ENCODE measurements at regions of chr5 and their contacts with region 1.

Region 1: DNA sequence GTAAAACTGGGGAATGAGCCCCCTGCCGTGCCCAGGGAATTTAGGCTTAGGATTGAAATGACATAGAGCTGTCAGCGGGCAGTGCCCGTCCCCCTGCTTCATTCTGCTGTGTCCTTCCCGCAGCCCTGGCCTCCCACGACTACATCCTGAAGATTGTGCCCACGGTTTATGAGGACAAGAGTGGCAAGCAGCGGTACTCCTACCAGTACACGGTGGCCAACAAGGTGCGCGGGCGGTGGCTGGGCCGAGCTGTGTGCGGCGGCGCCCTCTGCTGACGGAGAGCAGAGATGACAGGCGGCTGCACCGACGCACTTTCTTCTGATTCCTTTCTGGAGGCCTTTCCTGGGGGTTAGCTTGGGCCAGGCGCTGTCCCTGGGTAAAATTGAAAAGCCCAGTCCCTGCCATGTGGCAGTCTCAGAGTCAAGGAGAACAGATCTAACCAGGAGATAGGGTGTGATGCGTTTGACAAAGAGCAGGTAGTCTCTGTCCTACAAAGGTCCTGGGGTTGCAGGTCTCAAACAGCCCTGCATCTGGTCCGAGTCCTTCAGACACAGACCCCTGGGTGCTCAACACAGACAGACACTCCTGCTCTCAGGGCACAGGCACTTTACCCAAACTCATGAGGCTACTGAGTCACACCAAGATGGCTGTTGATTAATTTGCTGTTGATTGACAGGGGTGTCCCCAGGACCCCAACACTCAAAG is 26.8 kb upstream of the RPL26L1 start:
- DNase-seq: peak; percentile 82
- H3K4me3 Mint-ChIP-seq: peak overlapping the region; percentile 28
- H3K27ac Mint-ChIP-seq: peak overlapping the region; percentile 90
- H3K4me1 Mint-ChIP-seq: peaks cover 28% of the 10 kb centered on the region
- H3K27me3 Mint-ChIP-seq: no peaks in the 10 kb centered on the region
- CTCF ChIP-seq: peak; percentile 100

Region 2: GRCh38 chr5:172479044-172479783 is 453.3 kb before region 1 on chr5:
- CTCF ChIA-PET with region 1: interaction called, 3 read pairs
- POLR2A ChIA-PET with region 1: no interaction called
- intact Hi-C with region 1: loop called (anchors 5 kb)
- DNase-seq: peak; percentile 98
- H3K4me3 Mint-ChIP-seq: no peak overlapping the region
- H3K27ac Mint-ChIP-seq: no peak overlapping the region
- H3K4me1 Mint-ChIP-seq: peaks cover 25% of the 10 kb centered on the region
- H3K27me3 Mint-ChIP-seq: no peaks in the 10 kb centered on the region
- CTCF ChIP-seq: peak; percentile 92

Region 3: DNA sequence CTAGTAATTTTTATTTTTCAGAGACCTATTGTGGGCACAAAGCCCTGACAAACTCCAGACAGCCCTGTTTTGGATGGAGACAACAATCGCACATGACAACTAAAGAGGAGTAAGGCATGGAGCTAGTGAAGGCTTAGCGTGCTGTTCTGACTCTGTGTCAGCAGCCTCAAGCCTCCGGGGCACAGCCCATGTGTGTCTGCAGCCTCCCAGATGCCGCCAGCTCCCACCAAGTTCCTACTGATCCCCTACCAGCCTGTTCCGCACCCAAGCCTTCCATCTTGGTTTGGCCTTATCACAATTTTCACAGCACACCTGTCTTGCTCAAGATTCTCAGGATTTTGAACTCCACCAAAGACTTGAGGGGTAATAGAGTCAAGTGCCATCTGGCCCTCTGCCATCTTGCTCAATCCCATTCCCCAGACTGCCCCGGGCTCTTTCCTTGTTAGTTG is 407.9 kb before region 1 on chr5:
- CTCF ChIA-PET with region 1: no interaction called
- POLR2A ChIA-PET with region 1: no interaction called
- intact Hi-C with region 1: no loop called
- DNase-seq: peak; percentile 31
- H3K4me3 Mint-ChIP-seq: no peak overlapping the region
- H3K27ac Mint-ChIP-seq: no peak overlapping the region
- H3K4me1 Mint-ChIP-seq: peaks cover 4% of the 10 kb centered on the region
- H3K27me3 Mint-ChIP-seq: no peaks in the 10 kb centered on the region
- CTCF ChIP-seq: no peak

Region 4: DNA sequence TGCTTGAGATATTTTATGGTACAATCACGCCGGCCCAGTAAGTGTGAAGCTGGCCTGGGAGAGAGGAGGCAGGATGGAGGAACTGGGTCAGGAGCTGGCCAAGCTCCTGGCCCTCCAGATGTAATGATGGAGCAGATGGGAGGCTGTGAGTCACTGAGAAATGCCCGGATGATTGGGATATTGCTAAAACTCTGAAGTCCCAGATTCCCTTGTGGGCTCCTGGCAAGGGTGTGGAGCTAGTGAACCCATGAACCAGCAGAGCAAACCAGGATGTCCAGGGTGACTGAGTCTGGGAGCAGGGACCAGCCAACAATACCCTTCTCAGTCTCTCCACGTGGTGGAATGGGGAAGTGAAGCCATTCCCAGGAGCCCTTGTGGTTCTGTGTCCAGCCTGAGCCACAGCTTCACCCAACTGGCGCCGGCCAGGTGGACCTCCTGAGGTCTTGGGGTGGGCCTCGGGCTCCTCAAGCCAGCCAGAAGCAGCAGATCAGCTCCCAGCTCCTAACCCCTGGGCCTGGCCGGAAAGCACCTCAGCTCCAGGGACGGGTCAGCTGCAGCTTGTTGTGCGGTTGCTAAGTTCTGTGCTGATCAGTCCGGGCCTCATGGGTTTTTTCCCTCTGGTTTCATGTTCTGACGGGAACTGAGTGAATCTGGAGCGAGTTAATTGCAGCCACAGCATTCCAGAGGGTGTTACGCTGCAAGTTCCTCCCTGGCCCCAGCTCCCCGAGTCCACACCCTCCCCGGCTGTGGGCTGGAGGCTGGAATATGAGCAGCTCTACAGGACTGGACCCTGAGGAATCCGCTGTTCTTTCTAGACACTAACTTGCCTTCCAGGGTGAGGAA is 199.1 kb before region 1 on chr5:
- CTCF ChIA-PET with region 1: interaction called, 25 read pairs
- POLR2A ChIA-PET with region 1: interaction called, 11 read pairs
- intact Hi-C with region 1: loop called (anchors 5 kb)
- DNase-seq: peak; percentile 93
- H3K4me3 Mint-ChIP-seq: peak overlapping the region; percentile 63
- H3K27ac Mint-ChIP-seq: peak overlapping the region; percentile 99
- H3K4me1 Mint-ChIP-seq: peaks cover 44% of the 10 kb centered on the region
- H3K27me3 Mint-ChIP-seq: no peaks in the 10 kb centered on the region
- CTCF ChIP-seq: peak; percentile 18

Region 5: DNA sequence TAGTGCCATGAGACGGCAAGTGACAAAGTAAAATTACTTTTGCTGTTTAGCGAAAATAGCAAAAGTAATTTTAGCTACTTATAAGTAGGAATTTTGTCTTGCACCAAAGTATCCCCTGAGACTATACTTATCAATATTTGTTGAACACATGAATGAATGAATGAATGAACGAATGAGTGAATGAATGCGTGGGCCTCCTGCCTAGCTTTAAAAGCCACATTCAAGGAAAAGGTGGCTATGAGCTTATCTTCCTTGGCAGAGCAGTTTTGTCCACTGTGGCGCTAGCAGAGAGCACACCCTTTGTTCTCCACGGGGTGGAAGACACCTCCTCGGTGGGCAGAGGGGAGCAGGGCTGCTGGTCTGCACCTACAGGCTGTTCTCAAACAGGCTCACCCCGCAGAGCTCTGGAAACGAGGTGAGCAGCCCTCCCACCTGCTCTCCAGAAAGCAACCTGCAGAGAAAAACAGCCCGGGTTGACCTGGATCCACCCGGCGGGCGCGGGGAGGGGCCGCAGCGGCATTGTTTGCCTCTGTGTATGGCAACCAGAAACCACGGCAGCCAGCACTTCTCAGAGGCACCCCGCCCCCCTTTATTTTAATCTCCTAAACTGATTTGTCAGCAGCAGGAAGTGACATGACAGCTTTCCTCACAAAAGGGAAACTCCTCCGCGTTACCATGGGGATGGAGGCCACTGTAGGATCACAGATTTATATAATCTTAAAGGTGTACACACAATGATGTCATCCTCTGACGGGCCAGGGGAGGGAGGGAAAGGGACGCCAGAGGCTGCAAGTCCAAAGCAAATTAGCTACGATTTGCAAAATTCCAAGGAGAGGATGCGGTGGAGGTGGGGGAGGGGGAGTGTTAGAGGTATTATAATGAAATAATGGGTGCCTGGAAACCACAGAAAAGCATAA is 167.4 kb before region 1 on chr5:
- CTCF ChIA-PET with region 1: interaction called, 83 read pairs
- POLR2A ChIA-PET with region 1: interaction called, 120 read pairs
- intact Hi-C with region 1: loop called (anchors 1 kb)
- DNase-seq: peak; percentile 100
- H3K4me3 Mint-ChIP-seq: peak overlapping the region; percentile 98
- H3K27ac Mint-ChIP-seq: peak overlapping the region; percentile 99
- H3K4me1 Mint-ChIP-seq: peaks cover 24% of the 10 kb centered on the region
- H3K27me3 Mint-ChIP-seq: no peaks in the 10 kb centered on the region
- CTCF ChIP-seq: no peak

Region 6: DNA sequence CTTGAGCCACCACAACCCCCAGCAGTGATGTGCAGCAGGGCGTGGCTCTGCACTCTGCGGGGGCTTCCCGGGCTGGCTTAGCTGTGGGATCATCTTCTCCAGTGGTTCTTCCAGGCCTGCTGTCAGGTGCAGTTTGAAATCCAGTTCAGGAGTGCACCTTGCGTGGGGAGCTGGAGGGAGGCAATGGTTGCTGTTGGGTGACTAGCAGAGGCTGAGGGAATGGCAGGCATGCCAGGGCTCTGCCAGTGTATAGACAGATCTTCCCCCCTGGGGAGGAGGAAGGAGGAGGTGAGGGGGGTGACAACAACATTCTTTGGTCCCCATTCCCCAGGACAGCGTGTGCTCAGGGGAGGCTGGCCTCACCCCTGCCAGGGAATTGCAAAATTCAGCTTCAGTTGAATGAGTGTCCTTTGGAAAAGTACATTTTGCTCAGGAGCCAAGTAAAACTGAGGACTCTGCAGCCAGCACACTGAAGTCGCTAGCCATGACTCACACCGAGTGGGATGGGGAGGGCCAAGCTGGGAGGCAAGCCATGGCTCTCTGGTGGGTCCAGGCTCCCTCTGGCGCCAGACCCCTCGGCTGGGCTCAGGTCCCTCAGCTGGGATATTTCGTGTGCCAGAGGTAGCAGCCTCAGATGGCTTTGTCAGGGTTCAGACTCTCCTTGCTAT is 63.4 kb before region 1 on chr5:
- CTCF ChIA-PET with region 1: interaction called, 10 read pairs
- POLR2A ChIA-PET with region 1: interaction called, 28 read pairs
- intact Hi-C with region 1: loop called (anchors 1 kb)
- DNase-seq: peak; percentile 99
- H3K4me3 Mint-ChIP-seq: no peak overlapping the region
- H3K27ac Mint-ChIP-seq: no peak overlapping the region
- H3K4me1 Mint-ChIP-seq: peaks cover 15% of the 10 kb centered on the region
- H3K27me3 Mint-ChIP-seq: no peaks in the 10 kb centered on the region
- CTCF ChIP-seq: no peak

Region 7: GRCh38 chr5:172910828-172911627 is 21.4 kb before region 1 on chr5:
- CTCF ChIA-PET with region 1: interaction called, 28 read pairs
- POLR2A ChIA-PET with region 1: interaction called, 29 read pairs
- intact Hi-C with region 1: loop called (anchors 1 kb)
- DNase-seq: peak; percentile 99
- H3K4me3 Mint-ChIP-seq: no peak overlapping the region
- H3K27ac Mint-ChIP-seq: peak overlapping the region; percentile 90
- H3K4me1 Mint-ChIP-seq: peaks cover 43% of the 10 kb centered on the region
- H3K27me3 Mint-ChIP-seq: no peaks in the 10 kb centered on the region
- CTCF ChIP-seq: peak; percentile 50

Region 8: DNA sequence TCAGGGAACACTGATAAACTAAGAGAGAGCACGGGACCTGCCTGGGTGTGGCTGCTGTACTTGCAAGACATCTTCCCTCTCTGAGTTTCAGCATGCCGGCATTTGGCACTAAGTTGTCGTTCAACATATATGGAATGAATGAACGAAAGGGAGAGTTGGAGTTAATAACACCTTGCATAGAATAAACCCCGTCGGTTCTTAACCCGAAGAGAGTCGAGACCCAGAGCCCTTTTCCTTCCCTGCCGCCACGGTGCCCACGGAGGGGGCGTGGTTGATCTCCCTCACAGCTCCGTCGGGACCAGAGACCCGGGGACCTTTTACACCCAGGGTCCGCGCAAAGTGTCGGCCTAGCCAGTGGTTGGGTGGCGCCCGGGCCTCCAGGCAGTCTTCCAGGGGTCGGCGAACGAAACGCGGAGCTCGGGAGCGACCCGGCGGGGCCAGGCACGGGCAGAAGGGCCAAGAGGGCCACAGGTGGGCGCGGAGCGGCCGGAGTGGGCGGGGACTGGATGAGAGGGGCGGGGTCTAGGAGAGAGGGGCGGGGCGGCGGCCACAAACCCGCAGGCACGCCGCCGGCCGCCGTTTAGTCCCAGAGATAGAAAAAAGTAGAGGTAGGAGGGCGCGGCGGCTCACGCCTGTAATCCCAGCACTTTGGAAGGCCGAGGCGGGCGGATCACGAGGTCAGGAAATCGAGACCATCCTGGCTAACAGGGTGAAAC is 26.0 kb after region 1 on chr5:
- CTCF ChIA-PET with region 1: interaction called, 17 read pairs
- POLR2A ChIA-PET with region 1: interaction called, 7 read pairs
- intact Hi-C with region 1: no loop called
- DNase-seq: peak; percentile 80
- H3K4me3 Mint-ChIP-seq: peak overlapping the region; percentile 94
- H3K27ac Mint-ChIP-seq: peak overlapping the region; percentile 98
- H3K4me1 Mint-ChIP-seq: peaks cover 49% of the 10 kb centered on the region
- H3K27me3 Mint-ChIP-seq: no peaks in the 10 kb centered on the region
- CTCF ChIP-seq: no peak

Region 9: DNA sequence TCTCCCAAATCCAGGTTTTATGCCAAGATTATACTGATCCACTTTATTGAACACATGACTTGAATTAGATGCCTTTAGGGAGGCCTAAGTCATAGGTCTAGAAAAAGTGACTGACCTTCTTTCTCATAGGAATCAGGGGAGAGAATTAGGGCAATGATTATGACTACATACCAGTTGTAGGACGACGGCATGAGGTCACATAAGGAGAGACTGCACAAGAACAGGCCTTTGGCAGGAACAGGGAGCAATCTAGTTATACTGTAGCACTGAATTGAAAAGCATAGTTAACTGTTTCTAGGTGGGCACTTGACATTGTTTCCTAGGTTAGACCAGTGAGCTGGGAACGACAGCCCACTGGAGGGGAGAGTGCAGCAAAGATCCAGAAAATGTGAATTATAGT is 146.4 kb after region 1 on chr5:
- CTCF ChIA-PET with region 1: no interaction called
- POLR2A ChIA-PET with region 1: no interaction called
- intact Hi-C with region 1: no loop called
- DNase-seq: no peak
- H3K4me3 Mint-ChIP-seq: no peak overlapping the region
- H3K27ac Mint-ChIP-seq: no peak overlapping the region
- H3K4me1 Mint-ChIP-seq: peaks cover 12% of the 10 kb centered on the region
- H3K27me3 Mint-ChIP-seq: no peaks in the 10 kb centered on the region
- CTCF ChIP-seq: no peak

Region 10: DNA sequence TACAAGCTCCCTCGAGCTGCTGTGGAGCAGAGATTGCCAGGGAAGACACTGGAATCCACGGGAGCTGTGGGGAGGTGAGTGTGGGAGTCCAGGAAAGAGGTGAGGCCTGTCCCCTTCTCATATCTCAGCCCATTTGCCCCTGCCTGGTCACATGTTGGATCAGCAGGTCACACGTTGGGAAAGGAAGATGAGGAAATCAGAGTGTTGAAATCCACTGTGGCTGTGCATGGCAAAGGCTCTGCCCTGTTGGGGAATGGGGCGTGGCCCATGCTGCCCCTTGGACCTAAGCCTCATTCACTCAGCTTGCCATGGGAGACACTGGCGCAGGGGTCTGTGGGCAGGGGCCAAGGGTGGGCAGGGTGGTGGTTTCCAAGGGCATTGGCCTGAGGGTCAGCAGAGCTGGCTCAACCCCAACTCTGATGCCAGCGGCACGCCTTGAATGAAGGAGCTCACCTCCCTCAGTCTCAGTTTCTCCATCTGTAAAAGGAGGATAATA is 870.3 kb after region 1 on chr5:
- CTCF ChIA-PET with region 1: no interaction called
- POLR2A ChIA-PET with region 1: no interaction called
- intact Hi-C with region 1: no loop called
- DNase-seq: peak; percentile 99
- H3K4me3 Mint-ChIP-seq: no peak overlapping the region
- H3K27ac Mint-ChIP-seq: peak overlapping the region; percentile 80
- H3K4me1 Mint-ChIP-seq: peaks cover 44% of the 10 kb centered on the region
- H3K27me3 Mint-ChIP-seq: no peaks in the 10 kb centered on the region
- CTCF ChIP-seq: no peak

Measured in MCF 10A (cell line).